ENCODE measurements at regions of chr17 and their contacts with region 1.

Region 1: DNA sequence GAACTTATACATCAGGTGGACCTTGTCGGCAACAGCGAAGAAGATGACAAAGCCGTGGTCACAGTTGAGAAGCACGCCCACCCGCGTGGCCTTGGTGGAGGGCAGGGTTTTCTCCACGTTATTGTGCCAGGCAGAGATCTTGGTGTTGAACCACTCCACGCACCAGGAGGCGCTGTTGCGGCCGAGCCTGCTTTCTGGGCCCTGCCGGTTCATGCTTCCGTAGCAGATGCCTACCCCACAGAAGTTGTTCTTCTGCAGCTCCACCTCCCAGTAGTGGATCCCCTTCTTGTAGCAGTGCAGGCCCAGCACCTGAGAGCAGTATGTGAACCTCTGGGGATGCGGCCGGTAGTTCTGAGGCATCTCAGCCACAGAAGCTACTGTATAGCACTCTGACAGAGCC is 22.1 kb downstream of the TRIM25 start:
- DNase-seq: peak; percentile 34 to 49 (median 42)
- ATAC-seq: peak; percentile 73
- H3K4me3 ChIP-seq: no peak overlapping the region
- H3K27ac ChIP-seq: no peak overlapping the region
- H3K4me1 ChIP-seq: no peaks in the 10 kb centered on the region
- H3K27me3 ChIP-seq: no peaks in the 10 kb centered on the region
- CTCF ChIP-seq: peak; percentile 59 to 67 (median 63)
- EP300 ChIP-seq: no peak
- POLR2A ChIP-seq: no peak
- RAD21 ChIP-seq: peak in 1 of 2 experiments; percentile 38; a peak in 2 of 4 replicates

Region 2: GRCh38 chr17:56798908-56799307 is 92.9 kb before region 1 on chr17:
- CTCF ChIA-PET with region 1: no interaction called
- POLR2A ChIA-PET with region 1: no interaction called
- in situ Hi-C with region 1: no loop called
- intact Hi-C with region 1: no loop called
- DNase-seq: peak in 2 of 4 experiments; percentile 32 to 74
- ATAC-seq: peak; percentile 98
- H3K4me3 ChIP-seq: no peak overlapping the region
- H3K27ac ChIP-seq: no peak overlapping the region
- H3K4me1 ChIP-seq: no peaks in the 10 kb centered on the region; a peak in 1 of 5 replicates
- H3K27me3 ChIP-seq: peaks cover 18 to 25% of the 10 kb centered on the region in 2 experiments
- CTCF ChIP-seq: no peak
- EP300 ChIP-seq: no peak
- POLR2A ChIP-seq: no peak
- RAD21 ChIP-seq: no peak

Region 3: GRCh38 chr17:56876766-56877179 is 15.0 kb before region 1 on chr17:
- CTCF ChIA-PET with region 1: no interaction called
- POLR2A ChIA-PET with region 1: interaction called, 13 read pairs
- in situ Hi-C with region 1: no loop called
- intact Hi-C with region 1: no loop called
- DNase-seq: peak in 3 of 4 experiments; percentile 28 to 72 (median 48)
- ATAC-seq: peak; percentile 81
- H3K4me3 ChIP-seq: no peak overlapping the region
- H3K27ac ChIP-seq: peak overlapping the region; percentile 31; the same call in 2 of the 3 replicates
- H3K4me1 ChIP-seq: peaks cover 0 to 14% of the 10 kb centered on the region in 2 experiments; a peak in 3 of 5 replicates
- H3K27me3 ChIP-seq: no peaks in the 10 kb centered on the region
- CTCF ChIP-seq: peak; percentile 18 to 35 (median 19); a peak in 2 of 6 replicates
- EP300 ChIP-seq: peak; percentile 50; the same call in 1 of the 2 replicates
- POLR2A ChIP-seq: no peak
- RAD21 ChIP-seq: peak in 1 of 2 experiments; percentile 4; a peak in 1 of 4 replicates